ENCODE measurements at regions of chr4 and their contacts with region 1.

Region 1: GRCh38 chr4:183074296-183074990 is 24.6 kb upstream of the WWC2 start:
- DNase-seq: no peak
- H3K4me3 ChIP-seq: no peak overlapping the region
- H3K27ac ChIP-seq: no peak overlapping the region
- H3K4me1 ChIP-seq: no peaks in the 10 kb centered on the region
- H3K27me3 ChIP-seq: no peaks in the 10 kb centered on the region
- CTCF ChIP-seq: no peak

Region 2: GRCh38 chr4:182938205-182938645 is 136.2 kb before region 1 on chr4:
- intact Hi-C with region 1: loop called (anchors 2 kb)
- DNase-seq: peak in 1 of 2 donors; percentile 77
- H3K4me3 ChIP-seq: no peak overlapping the region
- H3K27ac ChIP-seq: no peak overlapping the region
- H3K4me1 ChIP-seq: no peaks in the 10 kb centered on the region
- H3K27me3 ChIP-seq: no peaks in the 10 kb centered on the region
- CTCF ChIP-seq: peak; percentile 59 to 92 (median 89)

Region 3: GRCh38 chr4:183053681-183054080 is 20.8 kb before region 1 on chr4:
- intact Hi-C with region 1: no loop called
- DNase-seq: no peak
- H3K4me3 ChIP-seq: no peak overlapping the region
- H3K27ac ChIP-seq: no peak overlapping the region
- H3K4me1 ChIP-seq: no peaks in the 10 kb centered on the region
- H3K27me3 ChIP-seq: no peaks in the 10 kb centered on the region
- CTCF ChIP-seq: no peak

Region 4: DNA sequence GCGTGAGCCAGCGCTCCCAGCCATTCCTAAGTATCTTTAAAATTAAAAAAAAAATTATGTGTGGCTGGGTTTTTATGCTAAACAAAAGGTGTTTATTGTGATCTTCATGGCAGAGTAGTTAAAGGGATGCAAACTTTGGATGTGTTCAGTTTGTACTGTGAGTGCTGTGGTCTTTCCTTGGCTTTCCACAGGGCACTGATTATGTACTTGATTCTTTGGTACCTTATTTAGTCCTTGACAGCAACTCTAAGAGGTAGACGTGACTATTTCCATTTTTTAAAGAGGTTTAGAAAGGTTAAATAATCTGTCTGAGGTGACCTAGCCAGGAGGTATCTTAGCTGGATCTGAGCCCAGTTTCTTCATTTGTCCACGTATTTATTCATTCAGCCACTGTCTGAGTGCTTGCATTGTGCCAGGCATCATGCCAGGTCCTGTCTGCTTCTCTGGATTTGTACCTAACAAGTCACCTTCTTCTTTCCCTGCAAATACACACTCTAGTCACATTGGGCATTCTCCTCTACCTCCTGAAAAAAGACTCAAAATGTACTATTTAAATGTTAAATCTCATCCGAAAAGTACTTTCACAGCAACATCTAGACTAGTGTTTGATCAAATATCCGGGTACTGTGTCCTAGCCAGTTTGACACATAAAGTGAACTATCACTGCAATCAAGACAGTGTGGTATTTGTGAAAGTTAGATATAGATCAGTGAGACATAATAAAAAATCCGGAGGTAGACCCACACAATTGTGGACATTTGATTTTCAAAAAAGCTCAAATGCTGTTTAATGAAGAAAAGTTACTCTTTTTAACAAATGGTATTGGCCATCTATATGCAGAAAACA is 56.1 kb after region 1 on chr4:
- intact Hi-C with region 1: no loop called
- DNase-seq: no peak
- H3K4me3 ChIP-seq: no peak overlapping the region
- H3K27ac ChIP-seq: no peak overlapping the region
- H3K4me1 ChIP-seq: peaks cover 0 to 8% of the 10 kb centered on the region in 2 donors
- H3K27me3 ChIP-seq: no peaks in the 10 kb centered on the region
- CTCF ChIP-seq: no peak

Region 5: GRCh38 chr4:183407128-183407585 is 332.7 kb after region 1 on chr4:
- intact Hi-C with region 1: loop called (anchors 10 kb)
- DNase-seq: peak; percentile 30 to 90
- H3K4me3 ChIP-seq: peak overlapping the region; percentile 52 to 63
- H3K27ac ChIP-seq: peak overlapping the region; percentile 19 to 36
- H3K4me1 ChIP-seq: no peaks in the 10 kb centered on the region
- H3K27me3 ChIP-seq: no peaks in the 10 kb centered on the region
- CTCF ChIP-seq: peak; percentile 81 to 98 (median 97)